ENCODE measurements at regions of chr1 and their contacts with region 1.

Region 1: GRCh38 chr1:34681480-34682451 is 73.1 kb upstream of the GJB5 start:
- DNase-seq: no peak
- ATAC-seq: no peak

Region 2: GRCh38 chr1:34419663-34420136 is 262.1 kb before region 1 on chr1:
- intact Hi-C with region 1: no loop called
- DNase-seq: no peak
- ATAC-seq: no peak

Region 3: GRCh38 chr1:34500451-34500850 is 181.3 kb before region 1 on chr1:
- intact Hi-C with region 1: no loop called
- DNase-seq: peak; percentile 62
- ATAC-seq: no peak

Region 4: DNA sequence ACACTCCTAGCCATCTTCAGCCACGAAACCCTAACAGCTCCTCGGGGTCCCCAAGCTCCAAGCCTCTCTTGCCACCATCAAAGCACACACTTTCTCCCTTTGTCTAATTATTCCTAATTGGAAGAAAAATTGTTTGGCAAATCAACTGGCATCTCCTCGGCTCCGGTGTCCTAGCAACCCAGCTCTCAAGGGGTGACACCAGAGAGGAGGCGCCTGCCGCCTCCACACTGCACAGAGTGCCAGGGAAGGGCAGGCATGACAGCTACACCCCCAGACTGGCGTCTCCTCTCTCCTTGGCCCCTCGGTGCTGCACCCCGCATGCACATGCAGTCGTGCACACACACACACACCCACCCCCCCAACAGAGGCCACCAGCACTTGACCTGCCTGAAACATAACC is 54.9 kb after region 1 on chr1:
- intact Hi-C with region 1: loop called (anchors 2 kb)
- DNase-seq: no peak
- ATAC-seq: no peak